ENCODE measurements at regions of chr4 and their contacts with region 1.

Region 1: GRCh38 chr4:86497980-86498862 is 95.9 kb upstream of the PTPN13 start:
- DNase-seq: peak; percentile 43
- H3K4me3 ChIP-seq: no peak overlapping the region
- H3K27ac ChIP-seq: no peak overlapping the region
- H3K27me3 ChIP-seq: no peaks in the 10 kb centered on the region
- CTCF ChIP-seq: peak; percentile 82

Region 2: GRCh38 chr4:86092684-86093083 is 405.5 kb before region 1 on chr4:
- CTCF ChIA-PET with region 1: no interaction called
- POLR2A ChIA-PET with region 1: no interaction called
- DNase-seq: peak; percentile 26
- H3K4me3 ChIP-seq: no peak overlapping the region
- H3K27ac ChIP-seq: no peak overlapping the region
- H3K27me3 ChIP-seq: no peaks in the 10 kb centered on the region
- CTCF ChIP-seq: no peak

Region 3: DNA sequence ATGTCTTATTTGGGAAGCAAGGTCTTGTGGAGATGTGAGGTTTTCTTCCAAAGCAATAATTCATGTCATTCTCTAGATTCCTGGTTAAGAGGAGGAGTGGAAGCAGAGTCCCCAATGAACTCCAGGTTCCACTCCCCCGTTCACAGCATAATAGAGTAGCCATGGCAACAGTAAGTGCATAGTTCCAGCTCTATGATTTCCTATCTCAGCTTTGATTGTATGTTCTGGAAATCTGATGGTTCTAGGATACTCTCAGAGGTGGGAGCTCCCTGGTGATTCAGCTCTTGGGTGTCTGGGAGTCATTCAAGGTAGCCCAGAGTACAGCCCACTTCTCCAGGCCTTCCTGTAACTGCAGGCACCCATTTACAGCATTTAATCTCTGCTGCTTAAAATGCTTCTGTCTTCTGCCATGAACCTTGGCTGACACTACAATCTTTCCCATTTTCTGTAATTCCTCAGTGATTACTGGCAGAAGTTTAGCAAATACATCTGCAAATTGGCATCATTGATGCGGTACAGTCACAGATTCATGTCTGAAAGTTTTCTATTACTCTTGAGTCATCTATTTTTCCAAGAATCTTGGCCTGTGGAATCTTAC is 380.4 kb before region 1 on chr4:
- CTCF ChIA-PET with region 1: no interaction called
- POLR2A ChIA-PET with region 1: no interaction called
- DNase-seq: peak; percentile 30
- H3K4me3 ChIP-seq: no peak overlapping the region
- H3K27ac ChIP-seq: no peak overlapping the region
- H3K27me3 ChIP-seq: peaks cover 2% of the 10 kb centered on the region
- CTCF ChIP-seq: no peak

Region 4: DNA sequence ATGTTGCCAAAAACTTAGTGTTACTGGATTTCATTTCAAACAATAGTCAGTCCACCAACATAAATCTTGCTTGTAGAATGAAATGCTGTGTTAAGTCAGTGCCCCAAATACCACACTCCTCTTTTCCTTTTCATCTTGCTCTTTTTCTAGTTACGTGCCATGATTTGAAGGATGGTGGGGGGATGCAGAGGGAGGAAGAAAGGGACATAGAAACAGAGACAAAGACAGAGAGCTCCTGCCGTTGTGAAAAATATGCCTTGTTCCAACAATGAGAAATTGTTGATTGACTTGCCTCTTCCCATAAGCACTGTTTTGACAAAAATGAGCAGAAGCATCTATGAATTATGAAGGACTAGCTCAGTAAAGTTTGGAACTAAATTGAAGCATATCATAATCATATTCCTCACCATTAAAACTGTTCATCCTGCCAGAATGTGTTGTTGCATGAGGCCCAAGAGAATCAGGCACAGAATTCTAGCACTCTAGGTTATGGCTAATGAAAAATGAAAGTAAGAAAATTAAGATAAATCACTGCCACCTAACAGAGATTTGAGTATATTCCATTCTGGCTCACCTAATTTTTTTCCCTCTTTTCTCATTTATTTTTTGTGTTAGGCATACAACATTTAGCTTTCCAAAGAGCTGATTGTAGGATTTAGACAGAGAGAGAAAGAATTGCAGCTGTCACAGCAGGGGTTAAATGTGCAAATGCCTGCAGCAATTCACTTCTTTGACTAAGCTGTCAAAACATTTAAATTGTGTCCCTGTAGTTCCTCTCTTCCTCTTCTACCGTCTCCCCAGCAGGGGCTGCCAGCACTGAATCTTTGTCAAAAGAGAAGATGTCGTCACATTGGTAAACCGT is 15.7 kb before region 1 on chr4:
- CTCF ChIA-PET with region 1: interaction called, 51 read pairs
- POLR2A ChIA-PET with region 1: no interaction called
- DNase-seq: no peak
- H3K4me3 ChIP-seq: no peak overlapping the region
- H3K27ac ChIP-seq: no peak overlapping the region
- H3K27me3 ChIP-seq: no peaks in the 10 kb centered on the region
- CTCF ChIP-seq: peak; percentile 40

Region 5: DNA sequence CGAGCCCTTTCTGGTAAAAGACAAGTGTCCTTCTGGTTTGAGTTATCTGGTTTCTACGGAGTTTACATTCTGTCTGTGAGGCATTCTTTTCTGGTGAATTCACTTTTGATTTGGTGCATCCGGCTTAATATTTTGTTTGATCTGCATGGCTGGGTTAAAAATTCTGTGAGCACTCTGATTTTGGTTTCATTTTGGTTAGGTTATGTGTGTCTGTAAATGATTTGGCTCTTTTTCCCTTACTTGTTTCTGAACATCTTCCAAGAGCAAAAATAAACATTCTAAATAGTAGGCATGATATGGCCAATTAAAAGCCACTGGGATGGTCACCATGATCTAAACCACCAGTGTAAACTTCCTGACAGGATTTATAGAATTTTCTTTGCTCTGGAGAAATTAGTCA is 10.2 kb after region 1 on chr4:
- CTCF ChIA-PET with region 1: interaction called, 115 read pairs
- POLR2A ChIA-PET with region 1: no interaction called
- DNase-seq: peak; percentile 30
- H3K4me3 ChIP-seq: peak overlapping the region; percentile 29
- H3K27ac ChIP-seq: no peak overlapping the region
- H3K27me3 ChIP-seq: no peaks in the 10 kb centered on the region
- CTCF ChIP-seq: no peak

Region 6: GRCh38 chr4:86544310-86544966 is 46.2 kb after region 1 on chr4:
- CTCF ChIA-PET with region 1: interaction called, 10 read pairs
- POLR2A ChIA-PET with region 1: no interaction called
- DNase-seq: no peak
- H3K4me3 ChIP-seq: no peak overlapping the region
- H3K27ac ChIP-seq: no peak overlapping the region
- H3K27me3 ChIP-seq: no peaks in the 10 kb centered on the region
- CTCF ChIP-seq: no peak

Region 7: DNA sequence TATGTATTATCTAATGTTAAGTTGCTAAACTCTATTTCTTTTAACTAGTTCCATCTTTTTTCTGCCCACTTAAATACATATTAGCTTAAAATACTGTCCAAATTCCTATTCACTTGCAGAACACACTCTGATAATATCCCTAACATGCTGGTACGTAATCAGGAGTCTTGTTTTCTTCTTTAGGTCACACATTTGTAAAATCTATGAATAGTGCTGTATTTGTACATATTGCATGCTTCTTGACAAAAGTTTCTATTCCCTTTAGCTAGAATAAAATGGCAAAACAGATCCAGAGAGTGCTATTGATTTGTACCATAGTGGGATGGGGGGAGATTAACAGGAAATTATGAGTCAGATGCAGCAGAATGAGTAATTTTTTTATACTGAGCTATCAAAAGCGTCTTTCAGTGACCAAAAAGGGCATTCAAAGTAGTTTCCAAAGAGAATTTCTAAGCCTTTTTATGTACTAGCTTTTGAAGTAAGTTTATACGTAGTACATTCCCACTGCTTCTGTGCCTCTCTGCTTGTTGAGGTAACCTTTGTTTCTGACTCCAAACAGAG is 222.4 kb after region 1 on chr4:
- CTCF ChIA-PET with region 1: interaction called, 23 read pairs
- POLR2A ChIA-PET with region 1: no interaction called
- DNase-seq: no peak
- H3K4me3 ChIP-seq: no peak overlapping the region
- H3K27ac ChIP-seq: no peak overlapping the region
- H3K27me3 ChIP-seq: no peaks in the 10 kb centered on the region
- CTCF ChIP-seq: no peak

Region 8: DNA sequence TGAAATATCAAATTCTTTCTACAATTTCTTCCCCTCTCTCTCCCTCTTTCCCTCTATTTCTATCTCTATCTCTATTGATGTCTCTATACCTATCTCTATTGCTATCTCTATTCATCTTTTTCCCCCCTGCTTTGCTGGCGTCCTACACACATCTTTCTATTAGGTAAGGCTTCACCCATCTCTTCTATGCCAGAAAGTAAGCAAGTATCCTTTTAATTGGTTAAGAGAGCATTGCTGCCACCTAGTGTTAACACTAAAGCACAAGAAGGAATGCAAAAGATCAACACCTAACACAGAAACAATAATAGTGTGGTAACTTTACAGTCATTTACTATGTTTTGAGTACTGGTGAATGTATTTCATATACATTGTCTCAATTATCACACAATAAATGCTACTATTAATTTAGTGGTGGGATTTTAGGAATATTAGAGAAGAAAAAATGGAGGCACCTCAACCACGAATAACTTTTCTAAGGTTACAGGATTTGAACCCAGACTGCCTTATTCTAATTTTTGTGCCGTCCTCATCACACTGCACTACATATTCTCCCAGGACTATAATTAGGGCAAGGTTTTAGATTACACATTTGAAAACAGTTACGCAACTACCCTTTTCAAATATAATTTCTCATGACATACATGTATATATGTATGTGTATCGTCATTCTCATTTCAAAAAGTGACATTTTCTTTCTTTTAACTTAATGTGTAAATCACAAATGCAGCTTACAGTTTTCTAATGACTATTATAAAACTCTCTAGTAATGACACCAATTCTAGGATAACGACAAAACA is 397.7 kb after region 1 on chr4:
- CTCF ChIA-PET with region 1: interaction called, 125 read pairs
- POLR2A ChIA-PET with region 1: no interaction called
- DNase-seq: no peak
- H3K4me3 ChIP-seq: no peak overlapping the region
- H3K27ac ChIP-seq: no peak overlapping the region
- H3K27me3 ChIP-seq: no peaks in the 10 kb centered on the region
- CTCF ChIP-seq: peak; percentile 71

Region 9: DNA sequence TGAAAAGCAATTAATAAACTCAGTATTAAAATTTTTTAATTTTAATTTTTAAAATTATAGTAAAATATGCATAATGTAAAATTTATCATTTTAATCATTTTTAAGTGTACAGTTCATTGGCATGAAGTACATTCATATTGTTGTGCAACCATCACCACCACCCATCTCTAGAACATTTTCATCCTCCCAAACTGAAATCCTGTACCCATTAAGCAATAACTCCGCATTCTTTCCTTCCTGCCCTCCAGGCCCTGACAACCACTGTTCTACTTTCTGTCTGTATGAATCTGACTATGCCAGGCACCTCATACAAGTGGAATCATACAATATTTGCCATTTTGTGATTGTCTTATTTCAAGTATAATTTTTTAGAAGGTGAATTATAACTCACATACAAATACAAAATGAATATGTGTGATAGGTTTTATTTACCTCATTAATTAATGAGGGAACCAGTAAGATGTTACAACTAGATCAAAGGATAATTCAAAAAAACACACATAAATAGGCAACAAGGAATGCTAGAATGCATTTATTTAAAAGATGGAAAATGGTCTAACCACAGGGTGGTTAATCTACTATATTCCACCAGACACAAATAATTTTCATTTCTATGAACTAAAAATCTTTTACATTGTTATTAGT is 423.5 kb after region 1 on chr4:
- CTCF ChIA-PET with region 1: interaction called, 45 read pairs
- POLR2A ChIA-PET with region 1: no interaction called
- DNase-seq: no peak
- H3K4me3 ChIP-seq: no peak overlapping the region
- H3K27ac ChIP-seq: no peak overlapping the region
- H3K27me3 ChIP-seq: no peaks in the 10 kb centered on the region
- CTCF ChIP-seq: no peak

Measured in AG04450 (cell line).